WTC11 (cell line): ENCODE measurements at regions of chr19 and their contacts with region 1.

Region 1: GRCh38 chr19:10000171-10000826 is 10.0 kb downstream of the COL5A3 start:
- DNase-seq: peak; percentile 84
- ATAC-seq: peak; percentile 82
- H3K4me3 Mint-ChIP-seq: no peak overlapping the region
- H3K27ac Mint-ChIP-seq: no peak overlapping the region
- H3K4me1 Mint-ChIP-seq: peaks cover 6% of the 10 kb centered on the region
- H3K27me3 Mint-ChIP-seq: peaks cover 25% of the 10 kb centered on the region
- CTCF ChIP-seq: peak; percentile 75

Region 2: GRCh38 chr19:9945319-9945966 is 54.9 kb before region 1 on chr19:
- CTCF ChIA-PET with region 1: interaction called, 30 read pairs
- POLR2A ChIA-PET with region 1: no interaction called
- DNase-seq: peak; percentile 36
- ATAC-seq: peak; percentile 72
- H3K4me3 Mint-ChIP-seq: no peak overlapping the region
- H3K27ac Mint-ChIP-seq: peak overlapping the region; percentile 1
- H3K4me1 Mint-ChIP-seq: peaks cover 15% of the 10 kb centered on the region
- H3K27me3 Mint-ChIP-seq: peaks cover 20% of the 10 kb centered on the region
- CTCF ChIP-seq: no peak

Region 3: GRCh38 chr19:9967326-9967725 is 33.0 kb before region 1 on chr19:
- CTCF ChIA-PET with region 1: interaction called, 41 read pairs
- POLR2A ChIA-PET with region 1: no interaction called
- DNase-seq: no peak
- ATAC-seq: no peak
- H3K4me3 Mint-ChIP-seq: no peak overlapping the region
- H3K27ac Mint-ChIP-seq: no peak overlapping the region
- H3K4me1 Mint-ChIP-seq: peaks cover 12% of the 10 kb centered on the region
- H3K27me3 Mint-ChIP-seq: peaks cover 54% of the 10 kb centered on the region
- CTCF ChIP-seq: no peak

Region 4: GRCh38 chr19:9986787-9987281 is 13.5 kb before region 1 on chr19:
- CTCF ChIA-PET with region 1: interaction called, 71 read pairs
- POLR2A ChIA-PET with region 1: interaction called, 4 read pairs
- DNase-seq: no peak
- ATAC-seq: peak; percentile 60
- H3K4me3 Mint-ChIP-seq: no peak overlapping the region
- H3K27ac Mint-ChIP-seq: no peak overlapping the region
- H3K4me1 Mint-ChIP-seq: peaks cover 7% of the 10 kb centered on the region
- H3K27me3 Mint-ChIP-seq: no peaks in the 10 kb centered on the region; the same call in 1 of the 2 replicates
- CTCF ChIP-seq: no peak

Region 5: GRCh38 chr19:10027158-10027693 is 26.9 kb after region 1 on chr19:
- CTCF ChIA-PET with region 1: interaction called, 63 read pairs
- POLR2A ChIA-PET with region 1: interaction called, 4 read pairs
- DNase-seq: no peak
- ATAC-seq: no peak
- H3K4me3 Mint-ChIP-seq: peak overlapping the region; percentile 36
- H3K27ac Mint-ChIP-seq: no peak overlapping the region
- H3K4me1 Mint-ChIP-seq: peaks cover 8% of the 10 kb centered on the region
- H3K27me3 Mint-ChIP-seq: peaks cover 13% of the 10 kb centered on the region
- CTCF ChIP-seq: no peak